Activated T-helper 1 cell treated with anti-CD3 and anti-CD28 coated beads, Interleukin-12 subunit alpha, Interleukin-12 subunit beta, Interleukin-2, Interleukin-4 antibody, amounts not matched to agents 30 ng/mL and 10 ng/mL and 1 ng/mL, durations not matched to agents 14 hours and 24 hours and 36 hours (primary cell): ENCODE measurements at regions of chr2 and their contacts with region 1.

Region 1: DNA sequence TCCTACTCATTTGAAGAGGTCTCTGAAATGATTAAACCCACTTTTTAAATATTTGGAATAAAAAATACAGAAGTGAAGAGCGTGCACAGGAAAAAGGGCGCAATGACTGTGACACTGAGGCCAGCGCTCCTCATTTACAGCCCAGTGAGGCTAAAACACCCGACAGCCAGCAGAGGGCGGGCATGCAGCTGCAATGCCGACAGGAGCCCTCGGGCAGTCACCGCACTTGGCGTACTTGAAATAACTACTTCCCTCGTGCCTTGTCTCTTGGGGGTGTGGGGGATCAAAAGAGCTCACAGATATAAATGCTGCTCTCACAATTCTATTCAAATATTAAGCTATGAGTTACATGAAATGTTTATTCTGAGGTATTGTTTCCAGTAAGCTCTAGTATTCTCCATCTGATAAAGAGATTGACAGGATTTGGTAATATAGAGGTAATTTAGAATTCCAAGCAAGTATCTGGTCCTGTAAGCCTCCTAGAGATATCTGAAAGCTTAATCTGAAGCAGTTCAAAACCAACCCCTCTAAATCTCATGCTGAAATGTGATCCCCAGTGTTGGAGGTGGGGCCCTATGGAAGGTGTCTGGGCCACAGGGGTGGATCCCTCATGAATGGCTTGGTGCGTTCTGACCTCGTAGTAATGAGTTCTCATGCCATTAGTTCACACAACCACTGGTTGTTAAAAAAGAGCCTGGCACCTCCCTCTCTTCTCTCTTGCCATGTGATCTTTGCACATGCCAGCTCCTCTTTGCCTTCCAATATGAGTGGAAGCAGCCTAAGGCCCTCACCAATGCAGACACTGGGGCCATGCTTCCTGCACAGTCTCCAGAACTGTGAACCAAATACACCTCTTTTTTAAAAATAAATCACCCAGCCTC is 93.6 kb downstream of the ZAP70 start:
- DNase-seq: peak; percentile 57
- H3K4me3 Mint-ChIP-seq: no peak overlapping the region
- H3K27ac Mint-ChIP-seq: no peak overlapping the region
- H3K4me1 Mint-ChIP-seq: no peaks in the 10 kb centered on the region
- H3K27me3 Mint-ChIP-seq: no peaks in the 10 kb centered on the region

Region 2: DNA sequence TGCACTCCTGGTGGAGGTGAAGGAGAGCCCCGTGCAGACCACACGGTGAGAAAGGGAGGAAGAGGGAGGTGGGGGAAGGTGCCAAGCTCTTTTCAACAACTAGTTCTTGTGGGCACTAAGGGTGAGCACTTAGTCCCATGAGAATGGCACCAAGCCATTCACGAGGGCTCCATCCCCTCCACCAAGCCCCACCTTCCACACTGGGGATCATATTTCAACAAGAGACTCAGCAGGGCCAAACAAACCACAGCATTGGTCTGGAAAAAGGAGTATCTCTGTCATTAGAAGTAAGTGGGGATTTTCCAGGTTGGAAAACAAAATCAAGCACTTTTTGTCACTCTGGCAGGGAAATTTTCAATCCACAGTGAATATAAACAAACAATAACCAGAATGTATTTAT is 55.2 kb before region 1 on chr2:
- intact Hi-C with region 1: no loop called
- DNase-seq: no peak
- H3K4me3 Mint-ChIP-seq: no peak overlapping the region
- H3K27ac Mint-ChIP-seq: no peak overlapping the region
- H3K4me1 Mint-ChIP-seq: peaks cover 16% of the 10 kb centered on the region
- H3K27me3 Mint-ChIP-seq: no peaks in the 10 kb centered on the region

Region 3: GRCh38 chr2:97819754-97820153 is 12.8 kb after region 1 on chr2:
- intact Hi-C with region 1: no loop called
- DNase-seq: no peak
- H3K4me3 Mint-ChIP-seq: no peak overlapping the region
- H3K27ac Mint-ChIP-seq: no peak overlapping the region
- H3K4me1 Mint-ChIP-seq: no peaks in the 10 kb centered on the region
- H3K27me3 Mint-ChIP-seq: no peaks in the 10 kb centered on the region

Region 4: DNA sequence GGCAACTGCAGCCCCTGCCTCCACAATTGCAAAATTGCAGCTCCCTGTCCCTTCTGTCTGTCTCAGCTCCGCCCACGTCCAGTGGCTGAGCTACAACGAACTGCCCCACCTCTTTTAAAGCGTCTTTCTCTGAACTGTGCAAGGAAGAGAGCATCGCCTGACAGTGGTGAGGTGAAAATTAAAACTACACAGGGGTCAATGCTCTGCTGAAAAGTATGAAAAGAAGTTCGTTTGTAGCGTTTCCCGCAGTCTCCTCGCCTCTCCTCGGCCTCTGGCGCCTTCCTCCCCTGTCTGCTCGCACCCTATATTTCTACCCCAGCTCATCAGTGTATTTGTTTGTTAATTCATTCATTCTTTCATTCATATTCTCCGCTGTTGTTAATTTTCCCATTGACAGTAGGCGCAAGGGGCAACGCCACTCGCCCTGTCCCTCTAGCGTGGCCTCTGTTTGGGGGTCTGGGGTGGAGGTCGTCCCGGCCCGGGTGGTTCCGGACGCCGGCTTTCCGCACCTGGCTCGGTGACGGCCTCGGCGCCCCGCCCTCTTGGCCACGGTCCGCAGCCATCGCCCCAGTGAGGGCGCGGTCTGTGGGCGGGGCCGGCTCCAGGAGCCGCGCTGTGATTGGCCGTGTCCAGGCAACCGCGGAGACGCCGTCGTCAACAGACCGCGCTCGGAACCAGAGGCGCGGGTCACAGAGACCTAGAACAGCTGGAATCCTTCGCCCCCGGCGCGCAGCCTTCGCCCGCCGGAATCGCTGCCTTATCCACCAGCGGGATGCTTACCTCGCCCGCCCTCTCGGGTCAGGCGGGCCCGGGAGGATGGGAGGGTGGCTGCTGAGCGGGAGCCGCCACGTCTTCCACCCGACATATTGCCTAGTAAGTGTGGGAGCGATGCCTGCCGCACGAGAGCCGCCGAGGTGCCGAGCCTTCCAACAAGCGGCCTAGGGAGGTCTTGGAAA is 279.8 kb after region 1 on chr2 and contains the start of gene VWA3B:
- intact Hi-C with region 1: loop called (anchors 2 kb)
- DNase-seq: peak; percentile 57
- H3K4me3 Mint-ChIP-seq: peak within 1 kb of the TSS; percentile 77
- H3K27ac Mint-ChIP-seq: no peak within 1 kb of the TSS
- H3K4me1 Mint-ChIP-seq: peaks cover 25% of the 10 kb centered on the region
- H3K27me3 Mint-ChIP-seq: peaks cover 36% of the 10 kb centered on the region
- total RNA-seq, gene VWA3B: not detected in 2 replicates

Region 5: DNA sequence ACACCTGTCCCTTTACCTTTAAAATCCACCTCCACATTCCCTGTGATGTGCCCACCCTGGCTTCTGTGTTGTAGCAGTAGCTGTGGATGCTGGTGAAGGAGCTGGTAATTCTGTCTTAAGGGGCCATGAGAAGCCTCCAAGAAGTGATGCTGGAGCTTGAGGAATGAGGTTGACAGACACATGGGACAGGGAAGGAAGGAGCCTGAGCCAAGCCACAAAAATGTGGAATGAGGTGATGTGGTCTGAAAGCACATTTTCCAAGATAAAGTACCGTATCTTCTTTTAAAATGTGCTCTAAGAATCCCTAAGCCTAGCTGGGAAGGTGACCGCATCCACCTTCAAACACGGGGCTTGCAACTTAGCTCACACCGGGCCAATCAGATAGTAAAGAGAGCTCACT is 311.2 kb after region 1 on chr2:
- intact Hi-C with region 1: loop called (anchors 10 kb)
- DNase-seq: no peak
- H3K4me3 Mint-ChIP-seq: no peak overlapping the region
- H3K27ac Mint-ChIP-seq: no peak overlapping the region
- H3K4me1 Mint-ChIP-seq: peaks cover 3% of the 10 kb centered on the region
- H3K27me3 Mint-ChIP-seq: peaks cover 11% of the 10 kb centered on the region

Region 6: DNA sequence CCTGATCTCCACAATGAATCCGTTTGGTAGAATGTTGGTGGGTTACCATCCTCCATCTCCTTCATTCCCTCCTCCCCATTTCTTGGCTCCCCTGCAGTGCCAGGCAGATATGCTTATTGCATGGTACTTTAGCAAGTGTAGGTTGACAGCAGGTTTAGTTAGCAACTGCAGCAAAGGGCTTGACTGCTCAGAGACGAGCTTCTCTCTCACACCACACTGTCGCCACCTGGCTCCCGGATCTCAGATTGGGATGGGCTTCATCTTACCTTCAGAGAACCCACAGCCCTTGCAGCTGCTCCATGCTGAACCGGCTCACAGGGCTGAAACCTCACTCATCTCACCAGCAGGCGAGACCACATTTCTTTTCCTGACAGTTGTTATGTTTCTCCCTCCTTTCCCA is 368.8 kb after region 1 on chr2:
- intact Hi-C with region 1: loop called (anchors 5 kb)
- DNase-seq: no peak
- H3K4me3 Mint-ChIP-seq: no peak overlapping the region
- H3K27ac Mint-ChIP-seq: peak overlapping the region; percentile 45
- H3K4me1 Mint-ChIP-seq: no peaks in the 10 kb centered on the region
- H3K27me3 Mint-ChIP-seq: peaks cover 36% of the 10 kb centered on the region

Region 7: GRCh38 chr2:98269274-98269673 is 462.3 kb after region 1 on chr2:
- intact Hi-C with region 1: loop called (anchors 1 kb)
- DNase-seq: no peak
- H3K4me3 Mint-ChIP-seq: no peak overlapping the region
- H3K27ac Mint-ChIP-seq: no peak overlapping the region
- H3K4me1 Mint-ChIP-seq: no peaks in the 10 kb centered on the region
- H3K27me3 Mint-ChIP-seq: peaks cover 10% of the 10 kb centered on the region

Region 8: GRCh38 chr2:98334439-98335078 is 527.6 kb after region 1 on chr2:
- intact Hi-C with region 1: no loop called
- DNase-seq: no peak
- H3K4me3 Mint-ChIP-seq: no peak overlapping the region
- H3K27ac Mint-ChIP-seq: no peak overlapping the region
- H3K4me1 Mint-ChIP-seq: no peaks in the 10 kb centered on the region
- H3K27me3 Mint-ChIP-seq: peaks cover 5% of the 10 kb centered on the region

Region 9: DNA sequence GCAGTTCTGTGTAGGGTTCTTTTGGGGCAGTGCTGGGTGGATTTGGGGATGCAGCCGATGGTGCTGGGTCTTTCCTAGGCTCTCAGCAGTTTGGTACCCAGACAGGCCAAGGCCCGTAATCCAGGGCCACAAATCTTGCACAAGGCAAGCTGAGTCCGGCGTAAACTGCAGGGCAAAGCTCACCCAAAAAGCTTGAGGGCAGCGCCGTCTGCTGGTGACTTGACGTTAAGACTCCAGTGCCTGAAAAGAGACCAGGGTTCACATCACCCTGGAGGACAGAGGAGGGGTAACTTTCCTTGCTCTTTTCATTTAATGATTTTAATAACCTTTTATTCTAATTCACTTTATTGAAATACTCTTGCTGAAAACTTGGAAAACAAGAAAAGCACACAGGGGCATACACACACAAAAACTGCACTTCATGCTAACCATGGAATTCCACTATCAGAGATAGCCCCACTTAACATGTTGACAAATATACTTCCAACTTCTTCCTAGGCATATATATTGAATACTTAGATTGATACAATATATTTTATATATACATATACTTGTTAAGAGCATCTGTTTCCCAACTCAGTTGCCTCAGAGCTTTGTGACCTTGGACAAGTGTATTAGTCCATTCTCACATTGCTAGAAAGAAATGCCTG is 578.2 kb after region 1 on chr2:
- intact Hi-C with region 1: loop called (anchors 1 kb)
- DNase-seq: peak; percentile 59
- H3K4me3 Mint-ChIP-seq: no peak overlapping the region
- H3K27ac Mint-ChIP-seq: no peak overlapping the region
- H3K4me1 Mint-ChIP-seq: no peaks in the 10 kb centered on the region
- H3K27me3 Mint-ChIP-seq: peaks cover 6% of the 10 kb centered on the region